Endothelial cell of umbilical vein (primary cell): ENCODE measurements at regions of chr7 and their contacts with region 1.

Region 1: DNA sequence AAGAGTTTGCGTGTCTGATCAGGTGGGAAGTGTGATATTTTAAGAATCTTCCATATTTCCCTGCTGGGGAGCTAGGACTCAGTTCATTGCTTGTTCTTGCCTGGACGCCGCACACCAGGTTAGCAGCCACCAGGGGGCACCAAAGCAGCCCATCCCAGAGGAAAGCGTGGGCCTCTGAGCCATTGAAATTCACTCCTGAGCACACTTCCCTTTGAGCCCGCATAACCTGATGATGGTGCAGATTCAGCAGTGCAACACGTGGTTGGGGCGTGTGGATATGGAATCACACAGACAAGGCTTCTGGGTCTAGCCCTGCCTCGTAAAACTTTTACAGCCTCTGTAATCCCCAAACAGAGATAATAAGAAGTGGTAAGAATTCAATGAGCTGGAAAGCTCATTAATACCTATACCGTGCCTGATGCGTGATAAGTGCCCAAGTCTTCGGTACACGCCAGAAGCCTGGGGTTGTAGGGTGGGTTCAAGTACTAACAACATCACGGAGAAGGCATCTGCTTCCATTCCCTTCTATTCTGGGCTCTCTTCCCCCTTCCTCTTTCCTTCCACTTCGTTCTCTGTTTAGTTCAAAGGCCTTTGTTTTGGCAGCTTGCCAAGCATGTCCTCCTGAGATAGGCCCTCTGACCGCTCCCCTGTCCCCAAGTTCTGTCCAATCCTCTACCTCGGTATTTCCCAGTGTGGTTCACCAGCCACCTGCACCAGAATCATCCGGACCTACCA is 130.1 kb upstream of the KMT2E start:
- DNase-seq: peak; percentile 87
- H3K4me3 ChIP-seq: peak overlapping the region in 1 of 3 experiments; percentile 35
- H3K27ac ChIP-seq: peak overlapping the region; percentile 31
- H3K4me1 ChIP-seq: peaks cover 5% of the 10 kb centered on the region
- H3K27me3 ChIP-seq: peaks cover 2 to 3% of the 10 kb centered on the region in 2 experiments
- CTCF ChIP-seq: peak; percentile 96 to 97
- POLR2A ChIP-seq: no peak

Region 2: DNA sequence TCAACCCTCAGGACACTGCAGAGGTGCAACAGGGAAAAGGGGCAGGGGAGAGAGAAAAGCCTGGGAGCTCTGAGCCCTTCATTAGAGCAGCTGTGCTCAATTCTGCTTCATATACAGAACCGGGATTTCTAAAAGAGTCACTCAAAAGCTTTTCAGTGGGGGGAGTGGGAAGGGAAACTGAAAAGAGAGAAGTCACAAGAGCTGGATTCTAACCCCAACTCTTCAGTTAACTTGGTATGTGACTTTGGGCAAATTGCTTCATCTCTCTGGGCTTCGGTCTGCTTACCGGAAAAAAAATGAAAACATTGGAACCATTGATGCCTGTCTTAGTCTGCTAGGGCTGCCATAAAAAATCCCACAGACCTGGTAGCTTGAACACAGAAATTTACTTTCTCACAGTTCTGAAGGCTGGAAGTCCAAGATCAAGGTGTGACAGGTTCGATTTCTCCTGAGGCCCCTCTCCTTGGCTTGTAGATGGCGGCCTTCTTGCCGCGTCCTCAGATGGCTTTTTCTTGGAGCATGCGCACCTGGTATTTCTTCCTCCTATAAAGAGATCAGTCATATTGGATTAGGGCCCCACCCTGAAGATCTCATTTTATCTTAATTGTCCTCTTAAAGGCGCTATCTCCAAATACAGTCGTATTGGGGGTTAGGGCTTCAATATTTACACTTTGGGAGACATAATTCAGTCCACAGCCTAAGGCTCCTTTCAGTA is 11.8 kb after region 1 on chr7:
- CTCF ChIA-PET with region 1: interaction called, 17 read pairs
- POLR2A ChIA-PET with region 1: no interaction called
- dilution Hi-C with region 1: no loop called
- intact Hi-C with region 1: no loop called
- DNase-seq: no peak
- H3K4me3 ChIP-seq: no peak overlapping the region
- H3K27ac ChIP-seq: no peak overlapping the region
- H3K4me1 ChIP-seq: no peaks in the 10 kb centered on the region
- H3K27me3 ChIP-seq: no peaks in the 10 kb centered on the region
- CTCF ChIP-seq: no peak
- POLR2A ChIP-seq: no peak

Region 3: DNA sequence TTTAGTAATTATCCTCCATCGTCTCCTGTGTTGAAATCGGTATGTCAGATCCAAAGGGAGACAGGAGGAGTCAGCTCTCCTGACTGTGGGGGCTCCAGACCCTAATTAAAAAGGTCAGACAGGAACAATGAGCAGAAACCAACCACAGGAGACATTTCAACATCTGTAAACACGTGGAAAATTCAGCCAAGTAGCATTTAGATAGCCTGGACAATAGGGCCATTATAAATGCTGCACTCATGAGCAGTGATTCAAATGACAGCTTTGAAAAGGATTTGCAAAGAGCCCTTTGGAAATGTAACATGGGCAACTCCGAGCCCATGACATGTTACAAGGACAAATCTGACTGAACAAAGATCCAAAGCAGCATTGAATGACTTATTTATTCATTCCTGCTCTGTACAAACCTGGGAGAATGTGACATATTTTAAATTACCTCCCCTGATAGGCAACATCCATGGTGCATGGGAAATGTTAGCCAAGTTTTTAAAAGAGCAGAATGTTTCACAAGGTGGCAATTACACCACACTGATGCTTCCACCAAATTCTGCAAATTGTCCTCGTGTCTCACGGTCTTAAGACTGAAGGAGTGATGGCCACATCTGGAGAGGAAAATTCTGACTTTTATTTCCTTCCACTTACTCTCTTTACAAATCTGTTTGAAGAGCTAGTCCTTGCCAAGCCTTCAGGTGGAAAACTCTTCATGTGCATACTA is 16.8 kb after region 1 on chr7:
- CTCF ChIA-PET with region 1: interaction called, 15 read pairs
- POLR2A ChIA-PET with region 1: no interaction called
- dilution Hi-C with region 1: no loop called
- intact Hi-C with region 1: no loop called
- DNase-seq: no peak
- H3K4me3 ChIP-seq: no peak overlapping the region
- H3K27ac ChIP-seq: no peak overlapping the region
- H3K4me1 ChIP-seq: no peaks in the 10 kb centered on the region
- H3K27me3 ChIP-seq: peaks cover 0 to under 1% of the 10 kb centered on the region in 2 experiments
- CTCF ChIP-seq: no peak
- POLR2A ChIP-seq: no peak

Region 4: DNA sequence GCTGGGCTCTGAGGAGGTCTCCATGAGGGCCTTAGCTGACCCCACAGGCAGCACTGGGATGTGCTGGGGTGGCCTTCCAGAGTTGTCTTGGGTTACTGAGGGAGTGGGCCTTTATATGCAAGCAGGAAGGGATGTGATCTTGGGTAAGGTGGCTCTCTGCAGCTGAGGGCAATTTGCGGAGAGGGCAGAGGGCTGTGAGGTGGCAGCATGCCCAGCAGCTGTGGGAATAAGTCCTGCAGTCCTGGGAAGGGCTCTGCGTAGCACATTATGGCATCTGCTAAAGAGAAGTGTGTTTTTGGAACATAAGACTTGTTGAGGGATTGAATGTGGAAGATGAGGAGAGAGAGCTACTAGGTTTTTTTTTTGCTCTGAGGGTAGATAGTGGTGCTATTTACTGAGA is 30.5 kb after region 1 on chr7:
- CTCF ChIA-PET with region 1: interaction called, 228 read pairs
- POLR2A ChIA-PET with region 1: interaction called, 4 read pairs
- dilution Hi-C with region 1: no loop called
- intact Hi-C with region 1: loop called (anchors 1 kb)
- DNase-seq: no peak
- H3K4me3 ChIP-seq: no peak overlapping the region
- H3K27ac ChIP-seq: no peak overlapping the region
- H3K4me1 ChIP-seq: no peaks in the 10 kb centered on the region
- H3K27me3 ChIP-seq: peaks cover 0 to 8% of the 10 kb centered on the region in 2 experiments
- CTCF ChIP-seq: no peak
- POLR2A ChIP-seq: no peak